T-cell (primary cell): ENCODE measurements at regions of chr11 and their contacts with region 1.

Region 1: DNA sequence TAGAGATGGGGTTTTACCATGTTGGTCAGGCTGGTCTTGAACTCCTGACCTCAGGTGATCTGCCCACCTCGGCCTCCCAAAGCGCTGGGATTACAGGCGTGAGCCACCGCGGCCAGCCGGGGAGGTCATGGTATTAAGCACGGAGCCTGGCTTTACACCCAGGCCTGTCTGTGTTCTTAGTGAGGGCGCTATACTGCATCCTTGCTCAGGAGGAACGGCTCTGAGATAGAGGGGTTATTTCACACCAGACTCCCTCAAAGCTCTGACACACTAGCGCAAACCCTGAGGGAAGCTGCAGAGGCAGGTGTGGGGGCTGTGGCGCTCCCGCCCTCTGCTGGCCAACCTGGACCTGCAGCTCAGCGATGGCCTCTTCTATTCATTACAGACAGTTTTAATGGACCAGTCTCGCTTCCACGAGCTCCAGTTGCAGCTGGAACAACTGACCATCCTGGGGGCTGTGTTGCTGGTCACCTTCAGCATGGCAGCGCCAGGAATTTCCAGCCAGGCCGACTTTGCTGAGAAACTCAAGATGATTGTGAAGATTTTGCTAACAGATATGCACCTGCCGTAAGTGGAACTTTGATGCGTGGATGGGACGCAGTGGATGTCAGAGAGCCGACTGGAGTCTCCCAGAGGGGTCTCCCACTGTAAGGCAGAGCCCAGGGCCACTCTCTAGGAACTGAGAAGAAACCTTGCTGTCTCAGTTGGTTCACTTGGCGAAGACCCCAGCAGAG is 26.2 kb downstream of the TCP11L1 start:
- DNase-seq: peak; percentile 42 to 83 (median 69)
- ATAC-seq: peak; percentile 82 to 94 (median 88)
- H3K4me3 ChIP-seq: no peak overlapping the region
- H3K4me3 Mint-ChIP-seq: no peak overlapping the region
- H3K27ac ChIP-seq: no peak overlapping the region
- H3K27ac Mint-ChIP-seq: no peak overlapping the region
- H3K4me1 ChIP-seq: peaks cover 12 to 18% of the 10 kb centered on the region in 2 experiments
- H3K4me1 Mint-ChIP-seq: peaks cover 25 to 32% (median 30%) of the 10 kb centered on the region in 3 donors
- H3K27me3 ChIP-seq: no peaks in the 10 kb centered on the region
- H3K27me3 Mint-ChIP-seq: no peaks in the 10 kb centered on the region

Region 2: GRCh38 chr11:32960553-32961164 is 105.0 kb before region 1 on chr11:
- CTCF ChIA-PET with region 1: interaction called, 43 to 77 read pairs
- POLR2A ChIA-PET with region 1: interaction called in 1 of 2 experiments, 3 read pairs
- DNase-seq: peak in 1 of 35 experiments; percentile 74
- ATAC-seq: no peak
- H3K4me3 ChIP-seq: no peak overlapping the region
- H3K4me3 Mint-ChIP-seq: no peak overlapping the region
- H3K27ac ChIP-seq: no peak overlapping the region
- H3K27ac Mint-ChIP-seq: no peak overlapping the region
- H3K4me1 ChIP-seq: no peaks in the 10 kb centered on the region
- H3K4me1 Mint-ChIP-seq: no peaks in the 10 kb centered on the region
- H3K27me3 ChIP-seq: no peaks in the 10 kb centered on the region
- H3K27me3 Mint-ChIP-seq: no peaks in the 10 kb centered on the region

Region 3: DNA sequence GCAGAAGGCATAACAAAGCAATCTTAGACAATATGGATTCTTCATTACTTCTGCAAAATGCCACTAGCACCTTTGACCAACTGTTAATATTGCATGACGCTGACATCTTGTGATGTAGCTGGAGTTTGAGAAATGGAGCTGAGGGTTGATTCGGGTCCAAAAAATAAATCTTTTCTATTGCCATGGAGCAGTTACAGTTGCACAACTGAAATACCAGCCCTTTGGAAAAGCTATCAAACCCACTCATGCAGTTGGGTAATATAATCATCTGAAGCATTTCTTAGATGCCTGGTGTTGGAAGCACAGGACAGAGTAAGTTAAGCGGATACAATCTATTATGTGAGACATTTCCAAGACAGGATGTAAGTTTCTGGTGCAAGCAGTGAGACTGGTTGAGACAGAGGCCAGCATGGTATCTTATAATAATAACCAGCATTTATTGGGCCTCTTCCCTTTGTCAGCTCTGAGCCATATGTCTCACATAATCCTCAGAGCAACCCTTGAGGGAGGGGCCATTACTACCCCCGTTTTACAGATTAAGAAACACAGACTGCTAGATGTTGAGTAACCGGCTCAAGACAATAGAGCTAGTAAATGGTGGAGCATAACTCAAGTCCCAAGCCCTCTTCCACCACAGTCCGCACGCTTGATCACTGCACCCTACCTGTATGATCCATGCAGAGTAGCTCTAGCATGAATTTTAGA is 911.0 kb after region 1 on chr11:
- CTCF ChIA-PET with region 1: no interaction called
- POLR2A ChIA-PET with region 1: no interaction called
- DNase-seq: no peak
- ATAC-seq: no peak
- H3K4me3 ChIP-seq: no peak overlapping the region
- H3K4me3 Mint-ChIP-seq: no peak overlapping the region
- H3K27ac ChIP-seq: no peak overlapping the region
- H3K27ac Mint-ChIP-seq: no peak overlapping the region
- H3K4me1 ChIP-seq: no peaks in the 10 kb centered on the region
- H3K4me1 Mint-ChIP-seq: no peaks in the 10 kb centered on the region
- H3K27me3 ChIP-seq: peaks cover 0 to 3% of the 10 kb centered on the region in 2 experiments
- H3K27me3 Mint-ChIP-seq: peaks cover 5 to 11% of the 10 kb centered on the region in 2 donors